ENCODE measurements at regions of chr7 and their contacts with region 1.

Region 1: DNA sequence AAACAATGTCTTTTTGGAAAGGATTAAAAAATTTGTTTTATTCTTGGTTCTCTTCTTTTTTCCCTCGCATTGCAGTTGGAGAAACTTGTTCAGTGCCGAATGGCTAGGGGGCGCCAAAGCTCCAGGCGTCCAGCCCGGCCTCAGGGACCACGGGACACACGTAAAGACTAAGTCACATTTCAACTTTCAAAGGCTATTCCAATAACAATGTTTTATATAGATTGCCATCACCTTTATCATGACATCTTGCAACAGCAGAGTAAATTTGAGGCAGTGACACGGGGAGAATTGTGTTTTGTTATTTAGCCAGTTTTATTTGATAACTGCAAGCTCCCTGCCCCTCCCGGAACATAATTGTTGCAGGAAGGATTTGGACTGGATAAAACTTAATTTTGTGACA is 2.2 kb upstream of the IGFBP3 start:
- DNase-seq: peak; percentile 71 to 83 (median 76)
- ATAC-seq: peak in 3 of 4 donors; percentile 52 to 61 (median 59)
- H3K4me3 ChIP-seq: peak overlapping the region in 9 of 12 donors; percentile 13 to 72 (median 59)
- H3K27ac ChIP-seq: peak overlapping the region in 7 of 12 donors; percentile 14 to 75 (median 48)
- H3K4me1 ChIP-seq: peaks cover 0 to 37% (median 22%) of the 10 kb centered on the region in 12 donors
- H3K27me3 ChIP-seq: peaks cover 0 to 49% (median 0%) of the 10 kb centered on the region in 9 donors
- CTCF ChIP-seq: peak; percentile 80 to 98 (median 91)
- POLR2A ChIP-seq: no peak

Region 2: DNA sequence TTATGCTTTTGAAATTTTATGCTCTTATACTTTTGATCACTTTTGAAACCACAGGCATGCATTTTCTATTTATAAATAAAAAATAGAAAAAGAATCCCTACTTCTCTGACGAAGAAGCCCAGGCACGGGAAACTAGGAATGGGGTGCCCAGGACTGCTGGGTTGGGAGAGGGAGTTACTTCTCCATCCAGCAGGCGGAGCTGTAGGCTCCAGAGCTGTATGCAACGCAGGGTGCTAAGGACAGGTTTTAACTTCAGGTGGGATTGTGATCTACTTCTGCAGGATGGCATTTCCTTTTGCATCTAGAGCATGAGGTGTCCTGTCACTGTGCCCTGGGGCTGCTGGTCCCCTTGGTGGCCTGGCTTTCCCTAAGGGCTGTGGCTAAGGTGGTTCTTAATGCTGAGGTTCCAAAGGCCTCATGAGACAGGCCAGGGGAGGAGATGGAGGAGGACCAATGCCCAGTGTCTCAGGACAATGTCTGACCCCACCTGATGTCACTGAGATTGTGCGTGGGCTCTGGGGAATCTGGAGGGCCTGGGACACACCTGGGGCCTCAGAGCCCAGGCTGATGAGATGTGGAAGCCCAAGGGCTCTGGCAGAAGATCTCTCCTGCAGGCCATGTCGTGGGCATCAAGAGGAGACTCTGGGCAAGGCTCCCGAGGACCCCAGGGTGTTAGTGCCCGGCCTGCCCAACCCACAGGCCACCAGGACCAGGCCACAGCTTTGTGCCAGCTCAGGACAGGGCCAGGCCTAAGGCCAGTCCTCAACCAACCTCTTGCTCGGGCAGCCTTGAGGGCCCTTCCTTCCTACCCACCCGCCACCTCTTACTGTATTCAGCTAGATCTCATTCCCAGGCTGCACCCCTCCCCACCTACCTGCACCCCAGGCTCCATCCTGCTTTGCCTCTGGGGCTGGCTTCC is 50.9 kb before region 1 on chr7:
- intact Hi-C with region 1: no loop called
- DNase-seq: no peak
- ATAC-seq: peak in 1 of 4 donors; percentile 23
- H3K4me3 ChIP-seq: no peak overlapping the region
- H3K27ac ChIP-seq: no peak overlapping the region
- H3K4me1 ChIP-seq: no peaks in the 10 kb centered on the region
- H3K27me3 ChIP-seq: peaks cover 0 to 3% (median 0%) of the 10 kb centered on the region in 9 donors
- CTCF ChIP-seq: peak in 7 of 12 donors; percentile 8 to 41 (median 25)
- POLR2A ChIP-seq: no peak

Region 3: DNA sequence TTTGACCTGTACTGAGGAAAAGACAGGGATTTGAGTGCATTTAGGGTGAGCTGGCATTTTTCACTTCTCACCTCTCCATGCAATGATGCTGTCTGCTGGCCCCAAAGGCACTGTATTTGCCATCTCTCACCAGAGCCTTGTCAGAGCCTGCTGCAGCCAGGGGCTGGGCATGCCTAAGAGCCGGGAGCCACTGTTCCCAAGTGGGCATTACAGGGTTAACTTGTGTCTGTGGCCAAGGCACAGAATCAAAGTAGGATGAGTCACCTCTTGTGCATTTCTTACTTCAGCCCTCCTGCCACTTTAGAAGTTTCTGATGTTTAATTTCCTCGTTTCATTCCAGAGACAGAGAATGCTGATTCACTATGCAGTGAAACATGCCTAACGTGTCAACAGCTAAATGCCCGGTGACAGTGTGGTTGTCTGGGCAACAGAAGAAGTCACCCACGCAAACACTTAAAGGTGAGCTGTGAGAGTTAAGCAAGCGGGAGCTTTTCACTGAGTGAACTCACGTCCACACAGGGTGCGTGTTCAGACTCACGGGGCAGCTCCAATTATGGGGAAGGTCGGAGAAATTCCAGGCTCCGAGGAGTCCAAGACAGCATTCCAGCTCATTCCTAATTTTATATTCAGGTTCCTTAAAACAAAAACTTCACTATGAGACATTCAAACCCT is 54.9 kb after region 1 on chr7:
- intact Hi-C with region 1: loop called in 1 of 10 experiments (anchors 5 kb)
- DNase-seq: no peak
- ATAC-seq: peak in 3 of 4 donors; percentile 36 to 71 (median 50)
- H3K4me3 ChIP-seq: no peak overlapping the region
- H3K27ac ChIP-seq: peak overlapping the region in 1 of 12 donors; percentile 4
- H3K4me1 ChIP-seq: peaks cover 0 to 25% (median 9%) of the 10 kb centered on the region in 12 donors
- H3K27me3 ChIP-seq: no peaks in the 10 kb centered on the region
- CTCF ChIP-seq: no peak
- POLR2A ChIP-seq: no peak

Region 4: DNA sequence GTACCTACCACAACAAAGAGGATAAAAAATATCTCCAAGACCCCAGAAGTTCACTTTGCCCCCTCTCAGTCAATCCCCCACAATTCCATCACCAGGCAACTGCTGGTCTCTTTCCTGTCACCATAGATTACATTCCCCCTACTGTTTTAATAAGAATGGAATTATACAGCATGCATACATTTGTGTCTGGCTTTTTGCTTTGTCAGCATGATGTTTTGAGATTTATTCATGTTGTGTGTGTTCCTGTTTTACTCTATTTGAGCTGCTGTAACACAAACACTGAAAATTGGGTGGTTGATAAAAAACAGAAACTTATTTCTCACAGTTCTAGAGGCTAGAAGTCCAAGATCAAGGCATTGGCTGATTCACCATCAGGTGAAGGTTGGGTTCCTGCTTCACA is 212.3 kb after region 1 on chr7:
- intact Hi-C with region 1: no loop called
- DNase-seq: no peak
- ATAC-seq: no peak
- H3K4me3 ChIP-seq: no peak overlapping the region
- H3K27ac ChIP-seq: no peak overlapping the region
- H3K4me1 ChIP-seq: no peaks in the 10 kb centered on the region
- H3K27me3 ChIP-seq: no peaks in the 10 kb centered on the region
- CTCF ChIP-seq: no peak
- POLR2A ChIP-seq: no peak

Region 5: GRCh38 chr7:46215987-46216567 is 292.8 kb after region 1 on chr7:
- intact Hi-C with region 1: loop called in 3 of 10 experiments (anchors 5 to 10 kb)
- DNase-seq: peak in 4 of 5 donors; percentile 56 to 73 (median 68)
- ATAC-seq: peak; percentile 84 to 89 (median 86)
- H3K4me3 ChIP-seq: no peak overlapping the region
- H3K27ac ChIP-seq: peak overlapping the region in 7 of 12 donors; percentile 50 to 75 (median 66)
- H3K4me1 ChIP-seq: peaks cover 0 to 30% (median 15%) of the 10 kb centered on the region in 12 donors
- H3K27me3 ChIP-seq: no peaks in the 10 kb centered on the region
- CTCF ChIP-seq: no peak
- POLR2A ChIP-seq: no peak

Region 6: DNA sequence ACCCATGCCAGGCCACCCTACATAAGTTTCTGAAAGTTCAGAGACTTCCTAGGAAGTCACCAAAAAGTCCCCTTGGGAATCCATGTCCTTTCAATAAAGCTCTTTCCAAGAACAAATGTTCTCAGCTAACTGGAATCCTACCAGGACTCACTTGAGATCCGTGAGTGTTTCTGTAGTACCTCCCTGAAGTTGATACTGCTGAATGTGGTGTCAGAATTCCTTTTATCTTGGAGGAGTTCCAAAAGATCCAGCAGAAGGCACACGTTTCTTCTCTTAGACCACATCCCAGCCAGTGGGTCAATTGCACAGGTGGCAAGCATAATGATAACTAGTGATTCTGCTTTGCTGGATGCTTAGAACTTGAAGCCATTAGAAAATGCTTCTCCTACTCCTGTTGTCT is 687.5 kb after region 1 on chr7:
- intact Hi-C with region 1: loop called in 2 of 10 experiments (anchors 5 to 10 kb)
- DNase-seq: no peak
- ATAC-seq: peak in 3 of 4 donors; percentile 26 to 75 (median 62)
- H3K4me3 ChIP-seq: no peak overlapping the region
- H3K27ac ChIP-seq: no peak overlapping the region
- H3K4me1 ChIP-seq: peaks cover 0 to 32% (median 7%) of the 10 kb centered on the region in 12 donors
- H3K27me3 ChIP-seq: no peaks in the 10 kb centered on the region
- CTCF ChIP-seq: no peak
- POLR2A ChIP-seq: no peak

Region 7: DNA sequence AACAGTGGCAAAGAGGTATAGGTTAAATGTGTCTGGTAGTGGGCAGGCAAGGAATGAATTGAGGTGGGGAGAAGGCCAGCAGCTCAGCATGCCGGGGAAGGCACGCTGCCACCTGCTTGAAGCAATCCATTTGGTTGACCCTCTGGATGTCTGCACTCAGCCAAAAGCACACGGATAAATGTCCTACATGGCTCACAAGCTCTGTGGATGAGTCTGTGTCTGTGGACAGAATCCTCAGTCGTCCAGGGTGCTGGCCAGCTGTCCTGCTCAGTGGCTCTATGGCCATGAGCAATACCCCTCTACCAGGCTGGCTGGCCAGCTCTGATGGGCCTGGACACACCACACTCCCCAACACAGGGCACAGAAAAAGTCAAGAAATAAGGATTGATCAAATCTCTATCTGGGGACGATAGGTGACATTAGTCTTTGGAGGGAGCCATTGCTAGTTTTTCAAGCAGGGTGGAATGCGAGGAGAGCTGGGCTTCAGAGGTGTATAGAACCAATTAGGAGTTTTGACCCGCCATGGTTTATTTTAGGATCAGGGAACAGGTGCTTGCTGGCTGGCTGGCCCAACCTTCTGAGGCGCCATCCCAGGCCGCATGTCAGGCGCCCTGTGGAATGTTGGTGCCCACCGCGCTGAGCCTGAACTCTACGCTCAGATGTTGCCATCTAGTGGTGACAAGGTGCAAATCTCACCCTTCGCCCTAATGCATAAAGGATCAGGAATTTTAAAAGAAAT is 1165.2 kb after region 1 on chr7:
- intact Hi-C with region 1: loop called (anchors 1 to 5 kb)
- DNase-seq: peak; percentile 41 to 77 (median 62)
- ATAC-seq: peak; percentile 80 to 94 (median 90)
- H3K4me3 ChIP-seq: no peak overlapping the region
- H3K27ac ChIP-seq: peak overlapping the region in 1 of 12 donors; percentile 39
- H3K4me1 ChIP-seq: peaks cover 0 to 12% (median 3%) of the 10 kb centered on the region in 12 donors
- H3K27me3 ChIP-seq: no peaks in the 10 kb centered on the region
- CTCF ChIP-seq: peak; percentile 77 to 96 (median 92)
- POLR2A ChIP-seq: no peak

Region 8: DNA sequence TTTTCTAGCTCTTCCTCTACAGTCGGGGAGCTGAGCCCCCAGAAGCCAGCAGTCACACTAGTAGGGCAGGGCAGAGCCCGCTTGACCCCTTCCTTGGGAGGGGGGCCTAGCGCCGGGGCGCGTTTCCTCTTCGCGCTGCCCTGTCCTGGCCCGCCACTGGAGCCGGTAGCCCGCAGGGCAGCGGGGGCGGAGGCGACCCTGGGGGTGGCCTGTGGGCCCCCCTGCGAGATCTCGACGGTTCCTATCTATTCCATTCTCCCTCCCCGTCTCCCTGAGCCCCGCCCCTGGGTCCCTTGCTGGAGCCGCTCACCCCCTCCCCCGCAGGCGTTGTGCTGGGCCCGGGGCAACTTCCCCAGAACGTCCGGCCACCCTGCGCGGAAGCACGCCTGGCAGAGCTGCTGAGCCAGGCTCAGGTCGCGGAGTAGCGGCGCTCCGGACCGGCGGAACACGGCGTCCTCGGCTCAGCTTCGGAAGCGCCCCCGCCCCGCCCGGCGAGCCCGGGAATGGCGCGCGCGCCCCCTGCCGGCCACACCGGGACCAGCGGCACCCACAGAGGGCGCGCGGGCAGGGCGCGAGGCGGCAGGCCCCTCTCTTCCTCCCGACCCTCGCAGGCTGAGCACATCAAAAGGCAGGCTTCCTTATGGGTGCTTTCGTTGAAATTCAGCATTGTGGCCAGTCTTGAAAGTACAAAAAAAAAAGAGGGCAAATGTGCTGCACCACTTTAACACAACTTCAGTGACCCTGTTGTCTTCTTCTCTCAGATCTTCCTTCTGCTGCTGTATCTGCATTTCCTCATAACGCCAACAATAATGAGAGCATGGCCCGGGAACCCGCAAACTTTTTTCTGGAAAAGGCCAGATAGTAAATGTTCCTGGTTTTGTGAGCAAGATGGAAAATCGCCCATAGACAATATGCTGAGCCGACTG is 1331.1 kb after region 1 on chr7:
- intact Hi-C with region 1: loop called in 9 of 10 experiments (anchors 1 to 10 kb)
- DNase-seq: peak; percentile 82 to 92 (median 89)
- ATAC-seq: peak; percentile 82 to 95 (median 92)
- H3K4me3 ChIP-seq: peak overlapping the region; percentile 39 to 80 (median 61)
- H3K27ac ChIP-seq: peak overlapping the region; percentile 79 to 98 (median 90)
- H3K4me1 ChIP-seq: peaks cover 0 to 18% (median 16%) of the 10 kb centered on the region in 12 donors
- H3K27me3 ChIP-seq: no peaks in the 10 kb centered on the region
- CTCF ChIP-seq: peak; percentile 63 to 100 (median 98)
- POLR2A ChIP-seq: peak in 1 of 2 donors; percentile 57